ENCODE measurements at regions of chr9 and their contacts with region 1.

Region 1: GRCh38 chr9:26892251-26893029 is at the start of gene CAAP1:
- DNase-seq: peak; percentile 96
- H3K4me3 ChIP-seq: peak within 1 kb of the TSS; percentile 88 to 100 (median 94)
- H3K27ac ChIP-seq: peak within 1 kb of the TSS; percentile 99 to 100 (median 99)
- H3K4me1 ChIP-seq: peaks cover 17 to 43% (median 26%) of the 10 kb centered on the region in 4 donors
- H3K27me3 ChIP-seq: no peaks in the 10 kb centered on the region
- CTCF ChIP-seq: peak in 4 of 5 experiments; percentile 36 to 60 (median 42)
- EP300 ChIP-seq: no peak
- POLR2A ChIP-seq: peak; percentile 90
- total RNA-seq, gene CAAP1: 27.3 to 103 (median 40.3) TPM

Region 2: DNA sequence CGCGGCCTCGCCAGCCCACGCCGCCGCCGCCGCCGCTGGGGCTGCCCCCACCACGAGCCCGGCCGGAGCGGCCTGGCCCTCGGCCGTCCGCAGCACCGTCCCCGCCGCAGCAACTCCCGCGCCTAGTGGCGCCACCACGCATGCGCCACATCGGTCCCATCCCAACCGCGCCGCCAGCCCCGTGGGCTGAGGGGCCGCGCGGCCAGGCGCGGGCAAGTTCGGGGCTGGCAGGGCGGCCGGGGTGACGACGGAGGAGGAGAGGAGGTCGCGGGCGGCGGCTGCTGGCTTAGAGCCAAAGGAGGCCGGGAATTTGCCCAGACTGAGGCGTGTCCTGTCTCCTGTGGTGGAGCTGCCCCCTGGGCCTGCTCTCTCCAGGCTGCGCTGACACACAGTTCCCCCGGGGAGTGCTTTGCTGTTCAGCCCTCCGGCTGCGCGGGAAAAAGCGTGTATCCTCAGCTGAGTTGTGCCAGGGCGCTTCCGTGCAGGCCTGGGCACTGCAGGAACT is 1214.2 kb before region 1 on chr9 and contains the start of gene TUSC1:
- in situ Hi-C with region 1: no loop called
- intact Hi-C with region 1: loop called (anchors 5 kb)
- DNase-seq: peak; percentile 84
- H3K4me3 ChIP-seq: peak within 1 kb of the TSS; percentile 62 to 97 (median 88)
- H3K27ac ChIP-seq: peak within 1 kb of the TSS; percentile 97 to 100 (median 100)
- H3K4me1 ChIP-seq: peaks cover 0 to 19% (median 9%) of the 10 kb centered on the region in 4 donors
- H3K27me3 ChIP-seq: no peaks in the 10 kb centered on the region
- CTCF ChIP-seq: peak in 4 of 5 experiments; percentile 7 to 53 (median 22)
- EP300 ChIP-seq: peak; percentile 51
- POLR2A ChIP-seq: no peak
- total RNA-seq, gene TUSC1: 13.5 to 24.7 (median 17.5) TPM

Region 3: DNA sequence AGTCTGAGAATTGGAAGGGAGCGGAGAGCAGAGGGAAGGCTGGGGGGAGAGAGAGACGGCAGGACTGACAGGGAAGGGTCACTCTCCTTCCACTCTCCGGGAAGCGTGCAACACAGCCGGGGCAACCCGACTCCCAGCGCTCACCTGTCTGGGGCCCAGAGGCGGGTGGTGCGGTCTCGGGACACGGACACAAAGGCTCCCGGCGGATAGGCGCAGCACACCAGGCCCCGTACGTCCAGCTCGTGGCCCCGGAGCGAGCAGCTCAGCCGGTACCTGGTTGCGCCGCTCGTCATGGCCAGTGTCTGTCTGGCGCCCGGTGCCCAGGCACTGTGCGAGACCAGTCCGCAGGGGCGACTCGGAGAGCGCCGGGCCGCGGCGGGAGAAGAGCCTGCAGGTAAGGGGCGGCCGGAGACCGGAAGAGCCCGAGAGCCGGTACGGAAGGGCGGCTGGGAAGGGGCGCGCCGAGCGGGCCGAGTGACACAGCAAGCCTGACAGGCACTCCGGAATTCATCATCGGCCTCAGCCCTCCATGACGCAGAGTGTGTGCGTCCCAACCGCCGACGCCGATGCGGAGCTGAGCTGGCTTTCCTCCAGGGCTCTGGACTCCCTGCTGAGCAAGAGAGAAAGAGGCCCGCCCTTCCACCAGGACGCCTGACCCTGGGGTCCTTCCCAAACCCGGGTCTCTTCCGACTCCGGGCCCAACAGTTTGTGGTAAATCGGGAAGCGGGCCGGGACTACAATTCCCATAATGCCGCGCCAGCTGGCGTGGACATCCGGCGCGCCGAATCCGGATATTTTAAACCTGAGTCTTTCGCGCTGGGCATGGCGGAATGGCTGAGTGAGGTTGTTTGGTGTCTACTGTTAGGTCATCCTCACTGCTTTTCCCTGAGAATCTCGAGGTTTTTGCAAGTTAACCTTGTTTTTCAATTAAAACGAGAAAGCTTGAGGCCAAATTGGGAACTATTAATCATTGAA is 54.6 kb after region 1 on chr9 and contains the start of gene PLAA:
- in situ Hi-C with region 1: loop called in 1 of 4 experiments (anchors 10 kb)
- intact Hi-C with region 1: loop called (anchors 5 kb)
- DNase-seq: peak; percentile 91
- H3K4me3 ChIP-seq: peak within 1 kb of the TSS; percentile 77 to 91 (median 80)
- H3K27ac ChIP-seq: peak within 1 kb of the TSS; percentile 93 to 96 (median 94)
- H3K4me1 ChIP-seq: peaks cover 18 to 32% (median 21%) of the 10 kb centered on the region in 4 donors
- H3K27me3 ChIP-seq: no peaks in the 10 kb centered on the region
- CTCF ChIP-seq: peak in 3 of 5 experiments; percentile 19 to 55 (median 34)
- EP300 ChIP-seq: no peak
- POLR2A ChIP-seq: peak; percentile 76
- total RNA-seq, gene PLAA: 12.0 to 30.2 (median 28.0) TPM

Region 4: DNA sequence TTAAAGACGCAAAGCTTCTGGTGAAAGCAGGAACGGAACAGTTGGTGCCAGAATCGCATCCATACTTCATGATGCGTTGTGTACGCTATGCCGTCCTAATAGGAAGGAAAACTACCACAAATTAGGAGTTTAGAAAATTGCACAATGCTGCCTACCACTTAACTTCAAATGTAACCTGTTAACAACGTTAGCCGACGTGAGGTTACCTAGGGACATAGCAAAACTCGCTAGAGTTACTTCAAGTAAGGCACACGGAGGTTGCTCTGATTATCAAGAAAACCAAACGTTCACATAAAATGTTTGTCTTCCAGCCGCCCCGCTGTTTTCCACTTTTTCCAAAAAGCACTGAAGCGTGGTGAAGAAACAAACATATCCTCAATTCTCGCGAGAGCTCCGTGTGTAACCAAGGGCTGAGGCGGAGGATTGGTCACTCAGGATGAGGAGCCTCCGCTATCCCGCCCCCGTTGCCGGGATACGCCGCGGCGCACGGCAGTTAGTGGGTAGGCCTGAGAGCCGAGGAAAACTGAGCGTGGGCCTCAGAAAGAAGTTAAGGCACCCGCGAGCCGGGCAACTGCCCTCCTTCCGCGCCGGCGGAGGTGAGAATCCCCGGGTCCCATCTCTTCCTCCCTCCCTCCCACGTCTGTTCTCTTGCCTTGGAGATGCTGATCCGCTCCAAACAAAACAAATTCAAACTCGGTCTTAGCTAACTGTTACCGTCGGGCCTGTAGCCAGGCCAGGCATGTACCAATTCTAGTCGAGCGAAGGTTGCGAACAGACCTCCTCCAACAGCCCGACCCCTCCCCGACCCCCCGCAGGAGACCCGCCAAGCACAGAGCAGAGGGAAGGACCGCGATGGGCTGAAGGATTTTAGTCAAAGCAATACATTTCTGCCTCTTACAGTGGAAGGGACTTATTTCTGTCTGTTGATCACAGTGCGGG is 63.8 kb after region 1 on chr9 and contains the start of gene IFT74:
- in situ Hi-C with region 1: loop called in 1 of 4 experiments (anchors 10 kb)
- intact Hi-C with region 1: no loop called
- DNase-seq: peak; percentile 98
- H3K4me3 ChIP-seq: peak within 1 kb of the TSS; percentile 12 to 56 (median 46)
- H3K27ac ChIP-seq: peak within 1 kb of the TSS; percentile 86 to 92 (median 88)
- H3K4me1 ChIP-seq: peaks cover 6 to 23% (median 13%) of the 10 kb centered on the region in 4 donors
- H3K27me3 ChIP-seq: no peaks in the 10 kb centered on the region
- CTCF ChIP-seq: no peak
- EP300 ChIP-seq: no peak
- POLR2A ChIP-seq: peak; percentile 59
- total RNA-seq, gene IFT74: 1.9 to 14.3 (median 9.0) TPM

Measured in transverse colon (tissue), 4 donors.